Activated CD4-positive, alpha-beta memory T cell treated with anti-CD3 and anti-CD28 coated beads for 36 hours (primary cell): ENCODE measurements at regions of chr9 and their contacts with region 1.

Region 1: DNA sequence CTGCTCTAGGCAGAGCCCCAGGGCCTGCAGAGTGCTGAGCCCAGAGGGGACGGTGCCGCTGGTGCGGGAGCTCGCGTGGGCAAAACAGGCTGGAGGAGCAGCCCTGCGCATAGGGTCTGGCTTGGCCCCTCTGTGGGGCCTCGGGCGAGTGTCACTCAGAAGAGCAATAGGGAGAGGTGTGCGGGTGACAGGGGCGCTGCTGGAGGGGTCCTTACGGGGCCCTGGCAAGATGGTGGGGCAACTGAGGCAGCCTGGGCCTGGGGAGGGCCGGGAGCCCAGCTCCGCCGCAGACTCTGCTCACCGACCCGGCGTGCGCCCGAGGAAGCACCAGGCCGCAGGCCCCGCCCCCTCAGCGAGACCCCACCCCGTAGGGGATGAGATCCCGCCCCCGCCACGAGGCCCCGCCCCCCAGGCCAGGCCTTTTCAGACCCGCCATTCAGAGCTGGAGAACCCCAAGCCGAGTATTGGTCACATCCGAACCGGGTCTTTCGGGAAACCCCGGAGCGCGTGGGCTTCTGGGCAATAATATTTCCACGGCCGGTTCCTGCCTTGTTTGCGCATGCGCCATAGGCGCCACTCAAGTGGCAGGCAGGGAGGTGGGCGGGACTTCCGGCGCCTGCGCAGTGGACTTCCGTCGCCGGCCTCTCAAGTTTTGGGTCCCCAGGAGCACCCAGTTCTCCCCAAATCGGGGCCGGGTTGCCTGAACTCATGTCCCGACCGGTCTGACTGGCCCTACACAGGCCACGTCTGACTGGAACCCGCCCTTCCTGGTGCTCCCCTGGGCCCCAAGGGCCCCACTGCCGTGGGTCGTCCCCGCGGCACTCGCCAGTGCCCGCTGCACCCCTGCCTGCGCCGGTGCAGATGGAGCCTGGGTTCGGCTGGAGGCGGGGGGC is 1.3 kb upstream of the RNF208 start:
- DNase-seq: peak; percentile 99
- H3K4me3 Mint-ChIP-seq: peak overlapping the region; percentile 73
- H3K27ac Mint-ChIP-seq: peak overlapping the region; percentile 58
- H3K4me1 Mint-ChIP-seq: peaks cover 5% of the 10 kb centered on the region
- H3K27me3 Mint-ChIP-seq: peaks cover 2% of the 10 kb centered on the region

Region 2: GRCh38 chr9:137046098-137046787 is 177.1 kb before region 1 on chr9 and contains the start of gene NPDC1:
- CTCF ChIA-PET with region 1: interaction called, 10 read pairs
- POLR2A ChIA-PET with region 1: no interaction called
- intact Hi-C with region 1: no loop called
- DNase-seq: peak; percentile 90
- H3K4me3 Mint-ChIP-seq: peak within 1 kb of the TSS; percentile 67
- H3K27ac Mint-ChIP-seq: no peak within 1 kb of the TSS
- H3K4me1 Mint-ChIP-seq: peaks cover 10% of the 10 kb centered on the region
- H3K27me3 Mint-ChIP-seq: peaks cover 34% of the 10 kb centered on the region
- total RNA-seq, gene NPDC1: 36.0 to 42.6 TPM

Region 3: GRCh38 chr9:137114610-137115391 is 108.5 kb before region 1 on chr9 and contains the start of gene DPP7:
- CTCF ChIA-PET with region 1: interaction called, 16 read pairs
- POLR2A ChIA-PET with region 1: interaction called, 3 read pairs
- intact Hi-C with region 1: loop called (anchors 1 kb)
- DNase-seq: peak; percentile 82
- H3K4me3 Mint-ChIP-seq: peak within 1 kb of the TSS; percentile 70
- H3K27ac Mint-ChIP-seq: no peak within 1 kb of the TSS
- H3K4me1 Mint-ChIP-seq: peaks cover 18% of the 10 kb centered on the region
- H3K27me3 Mint-ChIP-seq: no peaks in the 10 kb centered on the region
- total RNA-seq, gene DPP7: 195 to 208 TPM

Region 4: DNA sequence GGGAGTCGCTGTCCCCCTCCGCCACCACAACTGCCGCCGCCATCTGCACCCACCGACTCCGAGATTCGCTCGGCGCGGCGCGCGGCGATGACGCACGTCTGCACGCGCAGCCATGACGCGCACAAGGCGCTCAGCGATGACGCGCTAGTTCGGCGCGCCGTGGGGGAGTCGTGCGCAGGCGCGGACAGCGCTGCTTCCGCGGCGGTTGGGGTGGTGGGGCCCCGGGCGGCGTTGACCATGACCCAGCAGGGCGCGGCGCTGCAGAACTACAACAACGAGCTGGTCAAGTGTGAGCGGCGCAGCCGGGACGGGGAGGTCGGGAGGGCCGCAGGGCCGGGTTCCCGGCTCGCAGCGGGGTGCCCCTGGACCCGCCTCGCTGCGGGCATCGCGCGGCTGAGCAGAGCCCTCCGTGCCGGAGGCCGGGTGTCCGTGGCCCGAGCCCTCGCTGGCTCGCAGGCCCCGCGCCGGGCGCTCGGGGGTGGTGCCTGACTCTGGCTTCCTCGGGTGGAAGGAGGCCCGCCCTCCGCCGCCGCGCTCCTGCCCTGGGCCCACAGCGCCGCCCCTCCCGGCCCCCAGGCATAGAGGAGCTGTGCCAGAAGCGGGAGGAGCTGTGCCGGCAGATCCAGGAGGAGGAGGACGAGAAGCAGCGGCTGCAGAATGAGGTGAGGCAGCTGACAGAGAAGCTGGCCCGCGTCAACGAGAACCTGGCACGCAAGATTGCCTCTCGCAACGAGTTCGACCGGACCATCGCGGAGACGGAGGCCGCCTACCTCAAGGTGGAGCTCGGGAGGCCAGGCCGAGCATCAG is 34.6 kb before region 1 on chr9 and contains the starts of genes ANAPC2 and SSNA1:
- CTCF ChIA-PET with region 1: interaction called, 10 read pairs
- POLR2A ChIA-PET with region 1: interaction called, 7 read pairs
- intact Hi-C with region 1: loop called (anchors 1 kb)
- DNase-seq: peak; percentile 95
- H3K4me3 Mint-ChIP-seq: peak within 1 kb of the TSS; percentile 97
- H3K27ac Mint-ChIP-seq: peak within 1 kb of the TSS; percentile 93
- H3K4me1 Mint-ChIP-seq: peaks cover 40% of the 10 kb centered on the region
- H3K27me3 Mint-ChIP-seq: no peaks in the 10 kb centered on the region
- total RNA-seq, gene ANAPC2: 36.3 to 36.9 TPM
- total RNA-seq, gene SSNA1: 58.9 to 62.1 TPM

Region 5: GRCh38 chr9:137240861-137241489 is 17.7 kb after region 1 on chr9 and contains the start of gene TUBB4B:
- CTCF ChIA-PET with region 1: interaction called, 54 read pairs
- POLR2A ChIA-PET with region 1: interaction called, 38 read pairs
- intact Hi-C with region 1: loop called (anchors 1 kb)
- DNase-seq: peak; percentile 99
- H3K4me3 Mint-ChIP-seq: peak within 1 kb of the TSS; percentile 88
- H3K27ac Mint-ChIP-seq: peak within 1 kb of the TSS; percentile 94
- H3K4me1 Mint-ChIP-seq: peaks cover 21% of the 10 kb centered on the region
- H3K27me3 Mint-ChIP-seq: no peaks in the 10 kb centered on the region
- total RNA-seq, gene TUBB4B: 320 to 325 TPM

Region 6: DNA sequence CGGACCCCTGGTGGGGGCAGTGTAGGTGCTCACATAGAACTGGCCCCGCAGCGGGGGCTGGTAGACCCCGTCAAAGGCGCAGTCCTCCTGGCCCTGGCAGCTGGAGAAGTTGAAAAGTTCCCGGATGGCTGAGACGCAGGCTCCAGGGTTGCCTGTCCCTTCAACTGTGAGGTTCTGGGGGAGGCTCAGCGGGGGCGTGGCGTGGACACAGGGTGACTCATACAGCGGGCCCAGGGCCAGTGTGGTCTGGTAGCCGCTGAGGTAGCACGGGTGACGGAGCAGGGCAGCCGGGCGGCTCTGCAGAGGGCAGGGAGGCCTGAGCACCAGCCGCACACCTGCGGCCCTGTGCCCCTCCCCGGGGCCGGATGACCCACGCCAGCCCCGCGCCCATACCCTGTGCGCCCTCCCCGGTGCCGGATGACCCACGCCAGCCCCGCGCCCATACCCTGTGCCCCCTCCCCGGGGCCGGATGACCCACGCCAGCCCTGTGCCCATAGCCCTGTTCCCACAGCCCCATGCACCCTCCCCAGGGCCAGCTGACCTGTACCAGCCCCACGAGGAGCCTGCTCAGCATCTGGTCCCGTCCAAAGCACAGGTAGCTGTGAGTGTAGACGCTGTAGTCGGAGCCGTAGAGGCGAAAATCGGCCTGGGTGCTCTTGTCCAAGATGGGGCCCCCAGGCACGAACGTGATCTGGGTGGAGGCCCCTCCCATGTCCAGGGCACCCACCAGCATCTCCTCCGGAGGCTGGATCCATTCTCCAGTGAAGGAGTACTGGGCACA is 212.8 kb after region 1 on chr9:
- CTCF ChIA-PET with region 1: no interaction called
- POLR2A ChIA-PET with region 1: no interaction called
- intact Hi-C with region 1: no loop called
- DNase-seq: no peak
- H3K4me3 Mint-ChIP-seq: no peak overlapping the region
- H3K27ac Mint-ChIP-seq: no peak overlapping the region
- H3K4me1 Mint-ChIP-seq: no peaks in the 10 kb centered on the region
- H3K27me3 Mint-ChIP-seq: peaks cover 7% of the 10 kb centered on the region